ENCODE measurements at regions of chr3 and their contacts with region 1.

Region 1: GRCh38 chr3:186930641-186931531 is 560 bp downstream of the ST6GAL1 start:
- DNase-seq: peak; percentile 55 to 85
- ATAC-seq: peak; percentile 77 to 86 (median 78)
- H3K4me3 ChIP-seq: peak overlapping the region; percentile 79
- H3K4me3 Mint-ChIP-seq: peak overlapping the region; percentile 96
- H3K27ac ChIP-seq: peak overlapping the region; percentile 92
- H3K27ac Mint-ChIP-seq: peak overlapping the region; percentile 93 to 95
- H3K4me1 ChIP-seq: peaks cover 37% of the 10 kb centered on the region
- H3K4me1 Mint-ChIP-seq: peaks cover 38 to 46% of the 10 kb centered on the region in 2 donors
- H3K27me3 ChIP-seq: no peaks in the 10 kb centered on the region
- H3K27me3 Mint-ChIP-seq: no peaks in the 10 kb centered on the region
- CTCF ChIP-seq: no peak

Region 2: GRCh38 chr3:186849374-186849975 is 81.4 kb before region 1 on chr3:
- intact Hi-C with region 1: loop called (anchors 2 kb)
- DNase-seq: peak in 1 of 2 donors; percentile 78
- ATAC-seq: peak; percentile 68 to 82 (median 70)
- H3K4me3 ChIP-seq: no peak overlapping the region
- H3K4me3 Mint-ChIP-seq: peak overlapping the region; percentile 7
- H3K27ac ChIP-seq: no peak overlapping the region
- H3K27ac Mint-ChIP-seq: no peak overlapping the region
- H3K4me1 ChIP-seq: no peaks in the 10 kb centered on the region
- H3K4me1 Mint-ChIP-seq: peaks cover 16 to 25% of the 10 kb centered on the region in 2 donors
- H3K27me3 ChIP-seq: no peaks in the 10 kb centered on the region
- H3K27me3 Mint-ChIP-seq: peaks cover 14 to 27% of the 10 kb centered on the region in 2 donors
- CTCF ChIP-seq: peak; percentile 56

Region 3: GRCh38 chr3:186882881-186883685 is 47.8 kb before region 1 on chr3:
- intact Hi-C with region 1: loop called (anchors 10 kb)
- DNase-seq: no peak
- ATAC-seq: peak in 2 of 3 donors; percentile 50 to 57
- H3K4me3 ChIP-seq: no peak overlapping the region
- H3K4me3 Mint-ChIP-seq: peak overlapping the region; percentile 71
- H3K27ac ChIP-seq: no peak overlapping the region
- H3K27ac Mint-ChIP-seq: peak overlapping the region; percentile 41 to 45
- H3K4me1 ChIP-seq: peaks cover 14% of the 10 kb centered on the region
- H3K4me1 Mint-ChIP-seq: peaks cover 39 to 43% of the 10 kb centered on the region in 2 donors
- H3K27me3 ChIP-seq: no peaks in the 10 kb centered on the region
- H3K27me3 Mint-ChIP-seq: no peaks in the 10 kb centered on the region
- CTCF ChIP-seq: no peak

Region 4: DNA sequence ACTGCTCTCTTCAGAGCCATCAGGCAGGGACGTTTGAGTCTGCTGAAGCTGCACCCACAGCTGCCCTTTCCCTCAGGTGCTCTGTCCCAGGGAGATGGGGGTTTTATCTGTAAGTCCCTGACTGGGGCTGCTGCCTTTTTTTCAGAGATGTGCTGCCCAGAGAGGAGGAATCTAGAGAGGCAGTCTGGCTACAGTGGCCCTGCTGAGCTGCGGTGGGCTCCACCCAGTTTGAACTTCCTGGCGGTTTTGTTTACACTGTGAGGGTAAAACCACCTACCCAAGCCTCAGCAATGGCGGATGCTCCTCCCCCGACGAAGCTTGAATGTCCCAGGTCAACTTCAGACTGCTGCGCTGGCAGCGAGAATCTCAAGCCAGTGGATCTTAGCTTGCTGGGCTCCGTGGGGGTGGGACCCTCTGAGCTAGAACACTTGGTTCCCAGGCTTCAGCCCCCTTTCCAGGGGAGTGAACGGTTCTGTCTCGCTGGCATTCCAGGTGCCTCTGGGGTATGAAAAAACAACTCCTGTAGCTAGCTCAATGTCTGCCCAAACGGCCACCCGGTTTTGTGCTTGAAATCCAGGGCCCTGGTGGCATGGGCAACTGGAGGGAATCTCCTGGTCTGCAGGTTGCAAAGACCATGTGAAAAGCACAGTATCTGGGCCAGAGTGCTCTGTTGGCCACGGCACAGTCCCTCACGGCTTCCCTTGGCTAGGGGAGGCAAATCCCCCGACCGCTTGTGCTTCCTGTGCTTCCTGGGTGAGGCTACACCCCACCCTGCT is 21.6 kb before region 1 on chr3:
- intact Hi-C with region 1: loop called (anchors 1 kb)
- DNase-seq: peak; percentile 74 to 89
- ATAC-seq: peak; percentile 71 to 96 (median 85)
- H3K4me3 ChIP-seq: peak overlapping the region; percentile 4
- H3K4me3 Mint-ChIP-seq: peak overlapping the region; percentile 70
- H3K27ac ChIP-seq: peak overlapping the region; percentile 68
- H3K27ac Mint-ChIP-seq: peak overlapping the region; percentile 55 to 60
- H3K4me1 ChIP-seq: peaks cover 26% of the 10 kb centered on the region
- H3K4me1 Mint-ChIP-seq: peaks cover 41 to 53% of the 10 kb centered on the region in 2 donors
- H3K27me3 ChIP-seq: no peaks in the 10 kb centered on the region
- H3K27me3 Mint-ChIP-seq: no peaks in the 10 kb centered on the region
- CTCF ChIP-seq: no peak

Region 5: DNA sequence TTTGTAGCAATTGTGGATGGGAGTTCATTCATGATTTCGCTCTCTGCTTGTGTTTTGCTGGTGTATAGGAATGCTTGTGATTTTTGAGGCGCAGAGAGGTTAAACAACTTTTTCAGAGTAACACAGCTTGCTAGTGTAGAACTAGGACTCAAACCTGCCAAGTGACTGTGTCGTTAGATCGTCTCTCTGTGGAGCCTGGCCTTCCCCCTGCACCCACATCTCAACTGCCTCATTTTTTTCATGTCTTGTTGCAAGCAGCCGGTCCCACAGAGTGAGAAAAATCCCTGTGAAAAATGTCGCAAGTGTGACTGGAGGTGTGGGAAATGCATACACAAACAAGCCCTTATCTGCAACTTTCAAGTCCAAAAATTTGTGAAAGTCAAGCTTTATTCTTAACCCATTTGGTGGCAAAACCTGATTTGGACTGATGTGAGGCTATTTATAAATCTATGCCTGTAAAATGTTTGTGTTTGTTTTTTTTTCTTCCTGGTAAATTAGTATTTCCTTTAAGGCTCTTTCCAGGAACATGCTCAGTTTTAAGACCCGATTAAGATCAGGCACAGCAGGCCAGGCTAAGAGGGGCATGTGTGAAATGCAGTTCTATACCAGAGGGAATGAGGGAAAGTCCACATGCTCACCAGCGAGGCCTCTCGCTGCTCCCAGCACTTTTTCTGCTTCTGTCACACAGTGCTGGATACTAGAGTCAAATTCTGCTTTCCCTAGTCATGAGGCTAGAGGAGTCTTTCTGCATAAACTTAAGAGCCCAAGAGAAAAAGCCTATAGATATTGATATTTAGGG is 25.2 kb after region 1 on chr3:
- intact Hi-C with region 1: loop called (anchors 1 kb)
- DNase-seq: peak; percentile 35 to 51
- ATAC-seq: peak; percentile 85 to 88 (median 87)
- H3K4me3 ChIP-seq: no peak overlapping the region
- H3K4me3 Mint-ChIP-seq: peak overlapping the region; percentile 84
- H3K27ac ChIP-seq: peak overlapping the region; percentile 17
- H3K27ac Mint-ChIP-seq: peak overlapping the region; percentile 76 to 86
- H3K4me1 ChIP-seq: peaks cover 60% of the 10 kb centered on the region
- H3K4me1 Mint-ChIP-seq: peaks cover 87 to 88% of the 10 kb centered on the region in 2 donors
- H3K27me3 ChIP-seq: no peaks in the 10 kb centered on the region
- H3K27me3 Mint-ChIP-seq: no peaks in the 10 kb centered on the region
- CTCF ChIP-seq: no peak